Testis (tissue), 5 donors: ENCODE measurements at regions of chr17 and their contacts with region 1.

Region 1: DNA sequence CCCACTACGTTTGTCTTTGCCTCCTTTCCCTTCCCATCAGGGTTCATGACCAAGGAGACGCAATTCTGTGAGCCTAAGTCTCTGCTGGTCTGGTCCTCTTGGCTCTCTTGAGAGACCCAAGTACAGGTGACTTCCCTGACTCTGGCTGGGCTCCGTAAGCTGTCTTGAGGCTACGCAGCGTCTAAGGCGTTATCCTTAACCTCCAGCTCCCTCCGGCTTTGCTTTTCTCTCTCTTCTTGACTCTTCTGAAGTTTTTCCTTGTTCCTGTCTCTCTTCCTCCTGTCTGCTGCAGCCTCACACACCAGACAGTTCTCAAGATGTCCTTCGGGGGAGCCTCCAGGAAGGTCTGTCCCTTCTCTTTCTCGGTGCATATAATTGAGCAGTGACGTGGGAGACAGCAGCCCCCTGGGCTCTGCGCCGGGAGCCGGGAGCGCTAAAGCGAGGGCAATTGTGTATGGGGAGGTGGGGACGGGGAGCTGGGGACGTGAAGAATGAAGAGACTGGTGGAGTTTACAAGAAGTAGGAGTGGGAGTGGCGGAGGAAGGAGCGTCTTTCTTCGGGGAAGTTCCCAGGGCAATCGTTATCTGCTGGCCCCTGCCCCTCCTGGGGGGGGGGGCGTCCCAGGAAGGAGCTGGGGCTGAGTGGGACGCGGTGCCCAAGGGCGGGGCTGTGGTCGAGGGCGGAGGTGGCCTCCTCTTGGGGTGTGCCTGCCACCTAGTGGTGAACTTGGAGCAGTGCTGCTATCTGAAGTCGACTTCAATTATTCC is 6.9 kb upstream of the PIRT start:
- DNase-seq: peak; percentile 89
- H3K4me3 ChIP-seq: peak overlapping the region; percentile 44 to 50
- H3K27ac ChIP-seq: peak overlapping the region in 1 of 2 donors; percentile 4
- H3K4me1 ChIP-seq: peaks cover 6% of the 10 kb centered on the region
- H3K27me3 ChIP-seq: no peaks in the 10 kb centered on the region
- CTCF ChIP-seq: peak; percentile 92 to 99 (median 98)
- POLR2A ChIP-seq: no peak

Region 2: GRCh38 chr17:10646392-10646990 is 198.3 kb before region 1 on chr17:
- intact Hi-C with region 1: loop called (anchors 10 kb)
- DNase-seq: peak; percentile 85
- H3K4me3 ChIP-seq: no peak overlapping the region
- H3K27ac ChIP-seq: no peak overlapping the region
- H3K4me1 ChIP-seq: no peaks in the 10 kb centered on the region
- H3K27me3 ChIP-seq: no peaks in the 10 kb centered on the region
- CTCF ChIP-seq: peak; percentile 46 to 85 (median 84)
- POLR2A ChIP-seq: no peak

Region 3: GRCh38 chr17:10724546-10725195 is 120.1 kb before region 1 on chr17:
- intact Hi-C with region 1: no loop called
- DNase-seq: no peak
- H3K4me3 ChIP-seq: no peak overlapping the region
- H3K27ac ChIP-seq: no peak overlapping the region
- H3K4me1 ChIP-seq: no peaks in the 10 kb centered on the region
- H3K27me3 ChIP-seq: no peaks in the 10 kb centered on the region
- CTCF ChIP-seq: no peak
- POLR2A ChIP-seq: no peak

Region 4: GRCh38 chr17:10737168-10737622 is 107.6 kb before region 1 on chr17:
- intact Hi-C with region 1: loop called (anchors 5 kb)
- DNase-seq: peak; percentile 75
- H3K4me3 ChIP-seq: no peak overlapping the region
- H3K27ac ChIP-seq: no peak overlapping the region
- H3K4me1 ChIP-seq: peaks cover 5% of the 10 kb centered on the region
- H3K27me3 ChIP-seq: no peaks in the 10 kb centered on the region
- CTCF ChIP-seq: peak; percentile 39 to 69 (median 62)
- POLR2A ChIP-seq: no peak